Heart right ventricle (tissue), 16 donors: ENCODE measurements at regions of chr17 and their contacts with region 1.

Region 1: DNA sequence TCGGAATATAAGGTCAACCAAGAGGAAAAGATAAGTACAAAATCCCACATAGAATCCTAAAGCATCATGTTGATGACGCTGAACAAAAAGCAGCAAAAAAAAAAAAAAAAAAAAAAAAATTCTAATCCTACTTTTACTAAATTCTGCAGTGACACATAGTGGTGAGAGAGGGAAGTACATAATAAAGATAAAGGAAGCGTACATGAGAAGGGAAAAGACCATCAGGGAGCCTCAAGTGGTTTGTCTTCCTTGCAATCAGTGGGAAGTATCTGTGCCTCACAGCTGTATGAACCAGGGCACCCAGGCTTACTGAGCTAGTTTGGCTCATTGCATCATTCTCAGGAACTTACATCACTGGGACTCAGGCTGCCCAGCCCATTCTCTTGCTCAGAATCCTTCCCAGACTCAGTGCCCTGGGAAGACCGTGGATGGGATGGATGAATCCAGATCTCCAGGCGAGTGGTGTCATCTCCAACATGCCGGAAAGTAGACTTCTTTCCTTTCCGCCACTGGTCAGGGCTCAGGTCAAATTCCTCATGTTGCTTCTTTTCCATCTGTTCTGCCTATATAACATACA is 21.2 kb downstream of the SMG6 start:
- DNase-seq: no peak
- ATAC-seq: peak in 7 of 8 donors; percentile 29 to 86 (median 48)
- H3K4me3 ChIP-seq: no peak overlapping the region
- H3K27ac ChIP-seq: peak overlapping the region in 1 of 10 donors; percentile 43
- H3K4me1 ChIP-seq: peaks cover 0 to 13% (median 0%) of the 10 kb centered on the region in 9 donors
- H3K27me3 ChIP-seq: no peaks in the 10 kb centered on the region
- CTCF ChIP-seq: peak; percentile 47 to 70 (median 63)

Region 2: GRCh38 chr17:2244545-2245525 is 37.5 kb before region 1 on chr17:
- intact Hi-C with region 1: loop called in 1 of 10 experiments (anchors 5 kb)
- DNase-seq: peak; percentile 86 to 89
- ATAC-seq: peak; percentile 87 to 94 (median 92)
- H3K4me3 ChIP-seq: no peak overlapping the region
- H3K27ac ChIP-seq: peak overlapping the region in 9 of 10 donors; percentile 20 to 76 (median 61)
- H3K4me1 ChIP-seq: peaks cover 0 to 41% (median 14%) of the 10 kb centered on the region in 9 donors
- H3K27me3 ChIP-seq: no peaks in the 10 kb centered on the region
- CTCF ChIP-seq: peak; percentile 97 to 99 (median 99)